ENCODE measurements at regions of chr7 and their contacts with region 1.

Region 1: DNA sequence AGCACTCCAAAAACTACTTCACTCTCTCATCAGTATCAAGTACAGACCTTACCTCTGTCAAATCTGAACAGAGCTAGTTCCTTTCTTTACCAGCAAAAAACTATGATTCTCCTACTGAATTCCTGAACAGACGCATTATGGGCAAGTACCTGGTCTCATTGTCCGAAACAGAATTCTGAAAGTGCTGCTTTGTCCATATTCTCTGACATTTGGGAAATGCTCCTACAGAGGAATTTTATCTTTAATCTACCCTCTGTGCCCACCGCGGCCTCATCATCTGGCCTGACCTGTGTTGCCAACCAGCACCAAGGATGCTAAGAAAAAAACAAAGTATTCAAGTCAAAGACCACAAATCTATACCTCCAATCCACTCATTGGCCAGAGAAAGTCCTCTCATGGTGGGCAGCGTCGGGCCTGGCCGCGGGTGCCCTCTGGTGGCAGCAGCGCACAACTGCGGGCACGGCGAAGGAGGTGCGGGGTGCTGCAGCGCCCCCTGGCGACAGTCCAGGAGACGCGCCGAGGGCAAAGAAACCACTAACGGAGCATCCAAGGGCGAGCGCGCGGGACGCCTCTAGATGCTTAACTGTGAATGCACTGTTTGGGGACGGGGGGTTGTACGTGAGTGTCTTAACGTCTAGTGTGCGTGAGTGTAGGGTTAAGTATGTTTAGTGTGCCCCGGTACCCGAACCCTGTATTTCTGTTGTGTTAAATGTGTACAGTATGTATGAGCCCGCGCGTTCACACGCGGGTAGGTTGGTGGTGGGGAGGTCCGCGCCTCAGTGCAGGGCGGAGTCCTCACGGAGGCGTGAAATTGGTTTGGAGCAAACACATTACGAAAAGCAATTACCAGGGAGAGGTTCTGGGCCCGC is 5.0 kb upstream of the GBX1 start:
- DNase-seq: peak; percentile 90
- ATAC-seq: peak; percentile 71

Region 2: DNA sequence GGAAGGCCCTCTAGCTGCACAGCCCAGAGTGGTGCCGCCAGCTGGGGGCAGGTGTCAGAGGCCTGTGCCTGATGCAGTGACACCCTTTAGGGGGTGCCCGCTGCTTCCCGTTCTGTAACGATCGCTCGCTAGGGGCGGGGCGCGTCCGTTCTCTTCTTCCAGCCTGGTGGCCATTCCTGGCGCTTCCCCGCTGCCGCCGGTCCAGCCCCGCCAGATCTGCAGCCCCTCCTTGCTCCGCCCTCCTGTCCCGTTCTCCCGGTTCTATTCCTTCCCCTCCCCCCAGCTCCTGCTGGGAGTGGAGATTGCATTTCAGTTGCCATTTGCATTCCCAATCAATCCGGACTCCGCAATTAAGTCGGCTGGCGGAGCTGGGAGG is 47.0 kb before region 1 on chr7:
- intact Hi-C with region 1: loop called (anchors 5 kb)
- DNase-seq: peak; percentile 80
- ATAC-seq: peak; percentile 73